ENCODE measurements at regions of chr2 and their contacts with region 1.

Region 1: DNA sequence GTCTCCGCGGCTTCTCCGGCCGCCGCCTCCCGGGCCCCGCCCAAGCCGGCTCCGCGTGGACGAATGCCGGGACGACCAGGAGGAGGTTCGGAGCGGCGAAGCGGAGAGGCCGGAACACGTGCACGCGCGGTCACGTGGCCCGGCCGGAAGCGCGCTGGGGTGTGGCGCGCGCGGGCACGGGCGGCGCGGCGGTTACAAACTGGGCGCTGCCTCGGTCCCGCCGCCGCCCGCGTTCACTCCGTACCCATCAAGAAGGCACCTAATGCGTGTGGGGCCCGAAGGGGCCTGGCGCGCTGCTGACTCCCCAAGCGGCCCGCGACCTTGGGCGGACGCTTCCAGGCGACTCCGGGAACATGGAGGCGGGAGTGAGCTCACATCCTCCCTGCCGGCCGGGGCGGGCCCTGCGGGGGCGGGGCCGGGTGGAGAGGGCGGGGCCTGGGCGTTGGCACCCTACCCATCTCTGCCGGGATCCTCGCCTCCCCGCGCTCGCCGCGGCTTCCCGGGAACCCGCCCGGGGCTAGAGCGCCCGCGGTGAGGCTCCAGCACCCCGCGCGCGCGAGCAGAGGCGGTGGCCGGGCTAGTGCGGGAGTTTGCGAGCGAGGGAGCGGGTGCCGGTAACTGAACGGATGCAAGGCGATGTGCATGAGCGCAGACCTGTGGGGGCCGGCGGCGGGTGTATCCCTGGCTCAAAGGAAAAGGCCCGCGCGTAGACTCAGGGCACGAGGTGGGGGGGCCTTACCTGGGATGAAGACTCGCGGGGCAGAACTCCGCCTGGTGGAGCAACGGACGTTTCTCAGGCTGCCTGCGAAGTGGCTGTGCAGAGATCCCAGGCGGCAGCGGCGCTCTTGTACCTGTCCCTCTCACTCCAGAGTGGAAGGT is at the start of gene TMEM185B:
- DNase-seq: peak; percentile 76 to 97
- H3K4me3 ChIP-seq: peak within 1 kb of the TSS; percentile 72
- H3K27ac ChIP-seq: peak within 1 kb of the TSS; percentile 73
- H3K4me1 ChIP-seq: peaks cover 49% of the 10 kb centered on the region
- H3K27me3 ChIP-seq: no peaks in the 10 kb centered on the region
- CTCF ChIP-seq: peak; percentile 59; the same call in 1 of the 2 replicates
- total RNA-seq, gene TMEM185B: 23.5 and 30.3 TPM in 2 replicates

Region 2: GRCh38 chr2:120239488-120240287 is 16.4 kb after region 1 on chr2:
- CTCF ChIA-PET with region 1: interaction called, 4 read pairs
- POLR2A ChIA-PET with region 1: no interaction called
- intact Hi-C with region 1: loop called (anchors 2 kb)
- DNase-seq: peak; percentile 90 to 92
- H3K4me3 ChIP-seq: peak overlapping the region; percentile 41; the same call in 1 of the 2 replicates
- H3K27ac ChIP-seq: peak overlapping the region; percentile 95
- H3K4me1 ChIP-seq: peaks cover 87% of the 10 kb centered on the region
- H3K27me3 ChIP-seq: no peaks in the 10 kb centered on the region
- CTCF ChIP-seq: no peak

Region 3: GRCh38 chr2:120252225-120253021 is 29.1 kb after region 1 on chr2 and contains the start of gene RALB:
- CTCF ChIA-PET with region 1: interaction called, 7 read pairs
- POLR2A ChIA-PET with region 1: interaction called, 11 read pairs
- intact Hi-C with region 1: loop called (anchors 1 kb)
- DNase-seq: peak; percentile 98 to 100
- H3K4me3 ChIP-seq: peak within 1 kb of the TSS; percentile 80
- H3K27ac ChIP-seq: peak within 1 kb of the TSS; percentile 53
- H3K4me1 ChIP-seq: peaks cover 42% of the 10 kb centered on the region
- H3K27me3 ChIP-seq: no peaks in the 10 kb centered on the region
- CTCF ChIP-seq: no peak
- total RNA-seq, gene RALB: 74.2 and 86.6 TPM in 2 replicates

Region 4: GRCh38 chr2:120287183-120288015 is 64.1 kb after region 1 on chr2:
- CTCF ChIA-PET with region 1: no interaction called
- POLR2A ChIA-PET with region 1: interaction called, 30 read pairs
- intact Hi-C with region 1: loop called (anchors 1 kb)
- DNase-seq: peak; percentile 39 to 90
- H3K4me3 ChIP-seq: peak overlapping the region; percentile 1; the same call in 1 of the 2 replicates
- H3K27ac ChIP-seq: peak overlapping the region; percentile 66
- H3K4me1 ChIP-seq: peaks cover 54% of the 10 kb centered on the region
- H3K27me3 ChIP-seq: no peaks in the 10 kb centered on the region
- CTCF ChIP-seq: no peak

Measured in PC-9 (cell line).